GM13976 (cell line): ENCODE measurements at regions of chr2 and their contacts with region 1.

Region 1: DNA sequence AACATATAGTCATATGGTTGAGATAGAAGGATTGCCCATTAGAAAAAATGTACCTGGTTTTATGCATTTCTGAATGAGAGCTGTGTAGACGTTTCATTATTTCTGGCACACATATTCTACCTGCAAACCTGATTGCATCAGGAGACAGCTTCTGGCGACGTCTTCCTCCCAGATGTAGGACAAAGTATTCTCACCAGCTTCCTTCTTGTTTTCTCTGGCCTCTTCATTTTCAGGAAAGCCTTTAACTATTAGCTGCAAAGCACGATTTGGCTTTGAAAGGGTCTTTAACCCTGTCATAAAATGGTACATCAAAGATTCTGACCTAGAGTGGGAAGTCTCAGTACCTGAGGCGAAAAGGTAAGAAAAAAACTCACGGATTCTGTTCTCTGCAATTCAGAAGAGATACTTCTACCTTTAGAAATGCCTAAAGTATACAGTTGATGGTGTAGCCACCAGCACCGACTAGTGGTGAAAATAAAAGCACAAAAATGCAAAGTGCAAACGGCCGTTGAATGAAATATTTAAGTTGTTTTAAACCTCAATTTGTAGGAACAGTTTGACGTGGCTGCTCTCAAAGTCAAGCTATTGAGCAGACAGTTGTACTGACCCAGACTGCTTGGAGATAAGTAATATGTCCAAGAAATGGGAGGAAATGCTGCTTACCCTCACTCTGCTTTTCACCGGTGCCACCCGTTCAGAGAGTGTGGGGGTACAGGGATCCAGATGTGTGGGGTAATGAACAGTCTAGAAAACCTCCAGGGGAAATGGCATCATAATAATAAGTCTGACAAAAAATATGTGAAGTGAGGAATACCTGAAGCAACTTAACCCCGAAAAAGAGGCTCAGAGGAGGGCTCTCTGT is 20.2 kb downstream of the IL18RAP start:
- DNase-seq: peak; percentile 52
- CTCF ChIP-seq: peak; percentile 52

Region 2: GRCh38 chr2:101883863-101884262 is 559.3 kb before region 1 on chr2:
- in situ Hi-C with region 1: loop called (anchors 10 kb)
- DNase-seq: peak; percentile 47
- CTCF ChIP-seq: peak; percentile 32

Region 3: DNA sequence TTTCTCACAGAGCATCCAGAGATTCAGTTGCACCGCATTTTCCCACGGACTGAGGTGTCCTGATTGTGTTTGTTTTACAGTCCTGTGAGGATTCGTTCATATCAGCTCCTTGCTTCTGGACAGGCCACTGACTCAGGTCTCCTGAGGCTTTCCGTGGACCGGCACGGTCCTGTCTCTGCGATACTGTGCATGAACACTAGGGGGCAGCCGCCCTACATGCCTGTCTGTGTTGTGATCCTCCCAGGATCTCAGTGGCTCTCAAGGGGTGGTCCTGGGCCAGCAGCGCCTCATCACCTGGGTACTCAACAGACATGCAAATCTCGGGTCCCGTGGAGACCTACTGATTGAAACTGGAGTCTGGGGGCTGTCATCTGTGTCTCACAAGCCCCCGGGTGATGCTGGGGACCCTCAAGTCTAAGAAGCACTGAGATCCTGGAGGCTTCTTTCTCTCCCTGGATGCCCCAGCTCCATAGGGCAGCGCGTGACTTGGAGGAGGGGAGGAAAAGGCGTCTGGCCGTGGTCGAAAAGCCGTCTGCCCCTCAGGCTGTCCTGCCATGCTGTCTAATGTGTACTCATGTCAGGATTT is 422.5 kb before region 1 on chr2:
- in situ Hi-C with region 1: loop called (anchors 10 kb)
- DNase-seq: peak; percentile 75
- CTCF ChIP-seq: peak; percentile 97

Region 4: GRCh38 chr2:102251042-102251848 is 192.0 kb before region 1 on chr2:
- in situ Hi-C with region 1: loop called (anchors 10 kb)
- DNase-seq: peak; percentile 76
- CTCF ChIP-seq: peak; percentile 67